Activated CD8-positive, alpha-beta T cell treated with anti-CD3 and anti-CD28 coated beads for 36 hours (primary cell): ENCODE measurements at regions of chr2 and their contacts with region 1.

Region 1: GRCh38 chr2:7044261-7045250 is 127.3 kb downstream of the RNF144A start:
- DNase-seq: peak; percentile 69
- ATAC-seq: peak; percentile 86
- H3K4me3 Mint-ChIP-seq: no peak overlapping the region
- H3K27ac Mint-ChIP-seq: no peak overlapping the region
- H3K4me1 Mint-ChIP-seq: peaks cover 22% of the 10 kb centered on the region
- H3K27me3 Mint-ChIP-seq: no peaks in the 10 kb centered on the region
- CTCF ChIP-seq: peak; percentile 97

Region 2: DNA sequence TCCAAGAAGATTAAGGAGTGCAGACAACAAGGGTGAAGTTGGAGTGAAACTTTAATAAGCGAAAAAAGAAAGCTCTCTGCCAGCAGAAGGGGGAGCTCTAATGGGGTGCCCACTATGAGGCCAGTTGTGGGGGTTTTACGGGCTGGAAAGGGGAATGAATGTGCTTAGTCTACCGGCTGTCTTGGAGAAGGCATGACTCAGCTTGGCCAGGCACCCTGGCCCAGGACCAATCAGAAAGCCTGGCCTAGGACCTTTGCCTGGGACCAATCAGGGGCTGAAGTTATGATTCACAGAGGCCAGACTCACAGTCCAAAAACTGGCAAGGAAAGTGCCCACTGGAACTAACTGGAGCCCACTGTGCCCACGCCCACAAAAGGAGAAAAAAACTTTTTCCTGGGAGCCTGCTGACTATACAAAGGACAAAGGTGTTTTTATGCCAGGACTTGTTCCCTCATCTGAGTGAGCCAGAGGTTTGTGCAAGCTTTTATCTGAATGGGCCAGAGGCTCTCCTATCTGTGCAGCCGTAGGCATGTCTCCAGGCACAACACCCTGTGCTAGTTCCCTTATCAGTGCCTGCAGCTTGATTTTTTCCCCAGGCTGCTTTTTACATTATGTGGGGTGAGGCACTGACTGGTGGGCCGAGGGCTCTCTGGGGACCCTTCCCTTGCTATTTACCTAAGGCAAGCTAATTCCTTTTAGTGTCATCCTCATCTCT is 197.4 kb before region 1 on chr2:
- CTCF ChIA-PET with region 1: interaction called, 13 read pairs
- POLR2A ChIA-PET with region 1: no interaction called
- intact Hi-C with region 1: no loop called
- DNase-seq: no peak
- ATAC-seq: no peak
- H3K4me3 Mint-ChIP-seq: no peak overlapping the region
- H3K27ac Mint-ChIP-seq: no peak overlapping the region
- H3K4me1 Mint-ChIP-seq: peaks cover 3% of the 10 kb centered on the region
- H3K27me3 Mint-ChIP-seq: no peaks in the 10 kb centered on the region
- CTCF ChIP-seq: no peak

Region 3: GRCh38 chr2:6929196-6929819 is 115.2 kb before region 1 on chr2:
- CTCF ChIA-PET with region 1: interaction called, 10 read pairs
- POLR2A ChIA-PET with region 1: no interaction called
- intact Hi-C with region 1: no loop called
- DNase-seq: no peak
- ATAC-seq: peak; percentile 27
- H3K4me3 Mint-ChIP-seq: no peak overlapping the region
- H3K27ac Mint-ChIP-seq: no peak overlapping the region
- H3K4me1 Mint-ChIP-seq: peaks cover 52% of the 10 kb centered on the region
- H3K27me3 Mint-ChIP-seq: no peaks in the 10 kb centered on the region
- CTCF ChIP-seq: no peak

Region 4: GRCh38 chr2:7023542-7023941 is 21.0 kb before region 1 on chr2:
- CTCF ChIA-PET with region 1: interaction called, 24 read pairs
- POLR2A ChIA-PET with region 1: no interaction called
- intact Hi-C with region 1: no loop called
- DNase-seq: no peak
- ATAC-seq: no peak
- H3K4me3 Mint-ChIP-seq: no peak overlapping the region
- H3K27ac Mint-ChIP-seq: no peak overlapping the region
- H3K4me1 Mint-ChIP-seq: no peaks in the 10 kb centered on the region
- H3K27me3 Mint-ChIP-seq: no peaks in the 10 kb centered on the region
- CTCF ChIP-seq: no peak

Region 5: GRCh38 chr2:7057865-7058400 is 13.4 kb after region 1 on chr2:
- CTCF ChIA-PET with region 1: interaction called, 42 read pairs
- POLR2A ChIA-PET with region 1: no interaction called
- intact Hi-C with region 1: no loop called
- DNase-seq: peak; percentile 22
- ATAC-seq: peak; percentile 49
- H3K4me3 Mint-ChIP-seq: no peak overlapping the region
- H3K27ac Mint-ChIP-seq: peak overlapping the region; percentile 79
- H3K4me1 Mint-ChIP-seq: peaks cover 16% of the 10 kb centered on the region
- H3K27me3 Mint-ChIP-seq: no peaks in the 10 kb centered on the region
- CTCF ChIP-seq: no peak

Region 6: DNA sequence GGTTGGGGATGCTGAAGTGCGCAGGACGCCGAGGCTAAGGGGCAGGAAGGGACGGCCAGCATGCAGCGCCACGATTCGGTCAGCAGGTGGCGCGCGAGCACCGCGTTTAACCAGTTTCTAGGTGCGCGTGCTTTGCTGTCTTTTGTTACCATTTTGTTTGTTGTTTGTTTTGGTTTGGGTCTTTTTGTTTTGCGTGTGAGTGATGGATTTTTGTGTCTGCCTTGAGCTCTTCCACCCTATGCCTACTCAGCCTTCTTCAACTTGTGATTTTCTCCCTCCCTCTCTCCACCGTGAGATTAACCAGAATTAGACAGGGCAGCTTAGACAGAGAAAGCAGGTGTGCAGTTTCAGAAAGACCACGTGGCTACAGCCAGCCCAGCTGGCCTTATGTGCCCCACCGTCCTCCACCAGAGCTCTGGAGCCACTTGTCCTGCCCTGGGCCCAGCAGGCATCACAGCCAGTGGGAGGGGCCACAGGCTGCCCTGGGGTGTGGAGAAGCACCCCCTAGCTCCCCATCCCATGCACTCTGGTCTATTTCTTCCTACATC is 52.9 kb after region 1 on chr2:
- CTCF ChIA-PET with region 1: interaction called, 10 read pairs
- POLR2A ChIA-PET with region 1: no interaction called
- intact Hi-C with region 1: no loop called
- DNase-seq: peak; percentile 81
- ATAC-seq: peak; percentile 97
- H3K4me3 Mint-ChIP-seq: peak overlapping the region; percentile 59
- H3K27ac Mint-ChIP-seq: peak overlapping the region; percentile 62
- H3K4me1 Mint-ChIP-seq: peaks cover 7% of the 10 kb centered on the region
- H3K27me3 Mint-ChIP-seq: no peaks in the 10 kb centered on the region
- CTCF ChIP-seq: peak; percentile 93